Activated CD8-positive, alpha-beta memory T cell treated with anti-CD3 and anti-CD28 coated beads, Interleukin-2, amount 10 ng/mL, durations not matched to agents 7 days and 5 days (primary cell): ENCODE measurements at regions of chr1 and their contacts with region 1.

Region 1: DNA sequence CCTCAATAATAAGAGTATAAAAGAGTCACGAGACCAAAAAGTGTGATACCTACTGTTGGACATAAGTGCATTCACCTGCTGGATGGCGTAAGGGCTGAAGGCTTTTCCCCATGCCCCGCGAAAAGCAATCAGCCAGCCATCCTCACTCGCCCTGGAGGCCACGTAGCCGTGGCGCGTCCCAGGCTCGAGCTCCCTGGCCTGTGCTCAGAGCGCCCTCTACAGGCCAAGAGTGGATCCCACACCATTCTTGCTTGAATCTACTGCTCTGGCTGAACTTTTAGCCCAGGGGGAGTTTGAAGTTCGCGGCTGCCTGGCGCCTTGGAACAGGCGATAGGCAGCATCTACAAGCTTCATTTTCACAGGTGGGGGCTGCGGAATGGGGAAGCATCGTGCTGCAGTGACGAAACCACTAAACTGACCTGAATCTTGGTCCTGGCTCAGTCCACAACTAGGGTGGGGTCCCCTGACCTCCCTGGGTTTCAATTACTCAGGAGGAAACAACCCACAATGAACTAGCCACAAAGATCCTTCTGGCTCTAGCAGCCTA is 70.3 kb upstream of the SERBP1 start:
- DNase-seq: peak; percentile 91
- ATAC-seq: peak; percentile 99
- H3K4me3 Mint-ChIP-seq: no peak overlapping the region
- H3K27ac Mint-ChIP-seq: no peak overlapping the region
- H3K4me1 Mint-ChIP-seq: peaks cover 5% of the 10 kb centered on the region
- H3K27me3 Mint-ChIP-seq: peaks cover 8% of the 10 kb centered on the region

Region 2: DNA sequence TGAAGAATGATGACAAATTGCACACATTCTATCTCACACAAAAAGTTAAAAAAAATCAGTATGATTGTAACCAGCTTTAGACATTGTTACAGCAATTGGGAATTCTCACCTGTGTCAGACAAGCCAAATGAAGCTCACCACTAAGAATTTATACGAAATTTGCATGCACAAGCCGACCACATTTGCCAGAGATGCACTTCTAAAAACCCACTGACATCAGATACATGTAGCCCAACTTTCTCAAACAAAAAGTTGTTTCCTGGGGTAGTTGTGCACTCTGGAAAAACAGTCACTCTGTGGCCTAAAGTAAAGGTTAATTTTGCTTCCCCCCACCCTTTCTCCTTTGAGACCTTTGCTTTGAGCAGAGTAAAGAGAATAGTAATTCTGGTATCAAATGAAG is 260.7 kb before region 1 on chr1:
- CTCF ChIA-PET with region 1: interaction called, 26 read pairs
- DNase-seq: no peak
- ATAC-seq: no peak
- H3K4me3 Mint-ChIP-seq: no peak overlapping the region
- H3K27ac Mint-ChIP-seq: no peak overlapping the region
- H3K4me1 Mint-ChIP-seq: peaks cover 15% of the 10 kb centered on the region
- H3K27me3 Mint-ChIP-seq: no peaks in the 10 kb centered on the region

Region 3: GRCh38 chr1:67332653-67333529 is 167.6 kb before region 1 on chr1:
- CTCF ChIA-PET with region 1: interaction called, 12 read pairs
- DNase-seq: peak; percentile 74
- ATAC-seq: peak; percentile 85
- H3K4me3 Mint-ChIP-seq: peak overlapping the region; percentile 10
- H3K27ac Mint-ChIP-seq: peak overlapping the region; percentile 91
- H3K4me1 Mint-ChIP-seq: peaks cover 75% of the 10 kb centered on the region
- H3K27me3 Mint-ChIP-seq: no peaks in the 10 kb centered on the region

Region 4: DNA sequence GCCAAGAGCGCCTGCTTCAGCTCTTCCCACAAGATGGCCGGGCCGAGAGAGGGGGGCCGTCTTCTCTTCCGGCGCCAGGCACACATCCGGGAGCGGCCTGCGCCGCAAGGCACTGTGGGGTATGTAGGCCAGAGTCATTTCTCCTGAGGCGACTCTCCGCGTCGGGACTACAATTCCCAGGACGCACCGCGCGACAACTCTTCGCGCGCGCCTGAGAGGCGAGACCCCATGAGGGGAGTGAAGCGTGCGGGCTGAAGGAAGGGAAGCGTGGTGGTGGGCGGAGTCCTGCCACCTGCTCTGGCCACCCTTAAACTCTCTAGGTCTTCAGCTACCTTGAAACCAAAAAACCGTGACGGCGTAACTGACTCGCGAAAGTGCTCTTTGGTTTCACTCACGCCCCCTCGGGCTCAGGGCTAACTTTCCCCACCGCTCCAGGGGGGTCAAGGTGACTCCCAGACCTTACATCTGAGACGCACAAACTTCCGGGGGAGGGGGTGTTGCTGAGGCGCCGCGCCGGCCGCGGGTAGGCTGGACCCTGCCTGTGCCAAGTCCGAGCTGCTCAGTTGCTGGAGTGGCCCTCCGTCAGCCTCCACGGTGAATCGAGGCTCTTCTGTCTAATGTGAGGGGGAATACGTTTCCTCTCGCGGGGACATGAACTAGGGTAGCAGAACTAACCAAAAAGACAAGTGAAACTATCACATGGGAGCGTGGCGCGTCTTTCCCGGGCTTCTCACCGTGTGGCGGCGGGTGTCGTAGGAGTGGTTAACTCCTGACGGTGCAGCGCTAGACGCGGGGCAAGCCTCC is 69.9 kb before region 1 on chr1 and contains the start of gene SERBP1:
- CTCF ChIA-PET with region 1: interaction called, 23 read pairs
- DNase-seq: peak; percentile 98
- ATAC-seq: peak; percentile 85
- H3K4me3 Mint-ChIP-seq: peak within 1 kb of the TSS; percentile 87
- H3K27ac Mint-ChIP-seq: peak within 1 kb of the TSS; percentile 93
- H3K4me1 Mint-ChIP-seq: peaks cover 43% of the 10 kb centered on the region
- H3K27me3 Mint-ChIP-seq: no peaks in the 10 kb centered on the region
- total RNA-seq, gene SERBP1: 250 to 347 TPM

Region 5: GRCh38 chr1:67489643-67490042 is 10.8 kb before region 1 on chr1:
- CTCF ChIA-PET with region 1: interaction called, 16 read pairs
- DNase-seq: no peak
- ATAC-seq: peak; percentile 45
- H3K4me3 Mint-ChIP-seq: no peak overlapping the region
- H3K27ac Mint-ChIP-seq: no peak overlapping the region
- H3K4me1 Mint-ChIP-seq: no peaks in the 10 kb centered on the region
- H3K27me3 Mint-ChIP-seq: no peaks in the 10 kb centered on the region